Calu3 (cell line): ENCODE measurements at regions of chr12 and their contacts with region 1.

Region 1: DNA sequence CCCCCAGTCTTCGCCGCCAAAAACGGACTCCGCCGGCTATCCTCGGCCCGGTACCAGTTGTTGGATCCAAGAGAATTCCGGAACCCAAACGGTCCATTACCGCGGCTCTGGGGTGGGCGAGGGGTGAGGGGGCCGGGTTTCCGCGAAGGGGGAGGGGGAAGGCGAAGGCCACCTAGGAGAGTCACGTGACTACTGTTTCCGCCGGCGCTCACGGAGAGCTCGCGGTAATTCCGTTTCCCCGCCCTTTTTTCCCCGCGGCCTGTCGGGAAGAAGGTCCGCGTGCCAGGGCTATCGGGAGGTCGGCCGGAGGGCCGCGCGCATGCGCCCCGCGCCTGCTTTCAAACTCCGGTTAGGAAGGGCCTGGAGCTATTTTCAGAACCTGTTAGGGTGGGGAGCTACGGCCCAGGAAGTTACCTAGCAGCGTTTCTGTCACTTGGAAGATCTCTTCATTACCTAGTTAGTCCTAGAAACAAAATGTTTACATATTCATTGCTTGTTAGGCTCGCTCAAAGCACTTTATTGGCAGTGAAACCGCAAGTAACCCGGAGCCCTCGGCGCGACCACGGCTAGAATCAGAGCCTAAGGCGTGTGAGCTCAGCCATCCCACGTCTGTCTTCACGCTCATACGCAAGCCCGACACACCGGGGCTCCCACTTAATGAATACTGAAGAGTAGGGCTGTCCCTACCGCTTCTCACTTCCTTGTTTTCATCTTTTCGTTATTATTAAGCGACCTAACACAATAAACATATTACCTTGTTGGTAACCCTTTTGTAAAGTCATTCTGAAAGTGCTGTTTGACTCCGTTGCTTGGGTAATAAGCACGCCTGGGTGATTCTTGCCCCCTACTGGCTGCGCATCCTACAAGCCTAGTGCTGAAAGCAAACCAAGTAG is 624 bp upstream of the SBNO1 start:
- DNase-seq: peak; percentile 99
- H3K4me3 Mint-ChIP-seq: peak overlapping the region; percentile 73
- H3K27ac Mint-ChIP-seq: peak overlapping the region; percentile 87
- H3K4me1 Mint-ChIP-seq: no peaks in the 10 kb centered on the region
- H3K27me3 Mint-ChIP-seq: no peaks in the 10 kb centered on the region
- CTCF ChIP-seq: peak; percentile 72

Region 2: DNA sequence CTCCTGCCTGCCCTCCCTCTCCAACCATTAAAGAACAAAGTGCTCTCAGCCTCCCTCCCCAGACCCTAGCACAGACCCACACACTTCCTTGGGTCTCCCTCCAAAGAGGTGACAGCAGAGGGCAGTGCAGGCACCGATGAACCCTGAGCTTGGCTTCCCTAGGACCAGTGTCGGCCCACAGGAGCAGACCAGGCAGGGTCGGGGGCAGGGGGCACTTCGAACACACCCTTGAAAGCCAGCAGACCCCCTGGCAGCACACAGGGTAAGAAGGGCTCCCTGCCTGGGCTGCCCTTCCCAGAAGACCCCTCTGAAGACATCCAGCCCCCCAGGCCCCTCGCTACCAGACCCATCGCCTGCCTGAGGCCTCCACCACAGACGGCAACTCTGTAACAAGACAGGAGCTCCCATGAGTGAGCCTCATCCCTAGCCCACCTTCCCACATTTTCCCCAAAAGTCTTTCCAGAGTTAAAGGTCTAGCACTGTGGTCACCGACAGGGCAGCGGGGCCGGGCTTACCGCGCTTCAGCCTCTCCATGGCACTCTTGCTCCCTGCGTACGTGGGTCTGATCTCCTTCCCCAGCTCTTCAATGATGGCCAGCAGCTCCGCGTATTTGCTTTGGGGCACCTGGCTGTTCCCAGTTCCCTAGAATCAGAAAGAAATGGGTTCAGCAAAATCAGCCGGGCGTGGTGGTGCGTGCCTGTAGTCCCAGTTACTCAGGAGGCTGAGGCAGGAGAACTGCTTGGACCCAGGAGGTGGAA is 100.4 kb before region 1 on chr12:
- CTCF ChIA-PET with region 1: no interaction called
- intact Hi-C with region 1: no loop called
- DNase-seq: no peak
- H3K4me3 Mint-ChIP-seq: no peak overlapping the region
- H3K27ac Mint-ChIP-seq: peak overlapping the region; percentile 39
- H3K4me1 Mint-ChIP-seq: no peaks in the 10 kb centered on the region
- H3K27me3 Mint-ChIP-seq: no peaks in the 10 kb centered on the region
- CTCF ChIP-seq: no peak

Region 3: DNA sequence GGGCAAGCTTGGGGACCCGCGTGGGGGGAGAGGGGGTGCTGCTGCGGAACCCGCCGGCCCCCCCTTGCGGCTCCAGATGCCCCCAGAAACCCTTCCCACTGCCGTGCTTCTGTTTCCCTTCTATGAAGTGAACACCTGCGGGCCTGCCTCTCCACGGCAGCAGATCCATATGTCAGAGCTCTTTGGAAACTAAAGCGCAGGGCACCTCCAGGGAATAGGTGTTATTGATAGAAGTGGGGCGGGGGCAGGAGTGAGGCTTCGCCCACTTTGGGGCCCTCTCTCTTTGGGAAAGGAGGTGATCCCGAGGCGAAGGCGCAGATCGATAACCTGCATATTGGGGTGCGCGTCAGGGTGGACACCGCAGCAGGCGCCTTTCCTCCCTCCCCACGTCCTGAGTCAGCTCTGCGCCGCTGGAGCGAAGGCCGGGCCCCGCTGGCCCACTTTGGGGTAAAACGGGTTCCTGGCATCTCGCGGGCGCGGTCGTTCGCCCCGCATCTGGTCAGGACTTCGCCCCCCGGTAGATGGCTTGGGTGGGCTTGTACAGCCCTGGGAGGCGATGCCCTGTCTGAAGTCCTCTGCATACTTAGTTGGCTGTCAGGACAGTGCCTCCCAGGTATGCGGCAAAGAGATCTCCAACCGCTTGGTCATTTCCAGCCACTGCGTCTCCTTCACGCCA is 19.2 kb after region 1 on chr12:
- CTCF ChIA-PET with region 1: interaction called, 37 read pairs
- intact Hi-C with region 1: loop called (anchors 1 kb)
- DNase-seq: peak; percentile 36
- H3K4me3 Mint-ChIP-seq: peak overlapping the region; percentile 92
- H3K27ac Mint-ChIP-seq: peak overlapping the region; percentile 86
- H3K4me1 Mint-ChIP-seq: peaks cover 16% of the 10 kb centered on the region
- H3K27me3 Mint-ChIP-seq: no peaks in the 10 kb centered on the region
- CTCF ChIP-seq: no peak